ENCODE measurements at regions of chr19 and their contacts with region 1.

Region 1: DNA sequence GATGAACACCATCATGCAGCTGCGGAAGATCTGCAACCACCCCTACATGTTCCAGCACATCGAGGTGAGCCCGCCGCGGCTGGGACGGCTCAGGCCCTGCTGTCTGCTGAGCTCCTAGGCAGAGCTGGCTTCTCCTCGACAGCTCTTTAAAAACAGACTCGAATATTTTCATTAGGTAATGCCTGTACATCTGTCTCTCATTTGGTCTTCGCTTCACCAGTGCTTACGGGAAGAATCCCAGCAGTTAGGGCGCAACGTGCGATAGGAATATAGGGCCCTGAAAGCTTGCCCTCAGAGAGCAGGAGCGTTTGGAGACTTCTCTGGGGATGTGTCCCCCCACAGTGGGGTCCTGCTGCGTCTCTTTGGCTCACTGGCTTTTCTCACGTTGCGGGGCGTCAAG is 63.8 kb upstream of the LDLR start:
- DNase-seq: no peak
- H3K4me3 ChIP-seq: no peak overlapping the region
- H3K27ac ChIP-seq: no peak overlapping the region
- H3K4me1 ChIP-seq: peaks cover 4% of the 10 kb centered on the region
- H3K27me3 ChIP-seq: no peaks in the 10 kb centered on the region
- CTCF ChIP-seq: no peak

Region 2: DNA sequence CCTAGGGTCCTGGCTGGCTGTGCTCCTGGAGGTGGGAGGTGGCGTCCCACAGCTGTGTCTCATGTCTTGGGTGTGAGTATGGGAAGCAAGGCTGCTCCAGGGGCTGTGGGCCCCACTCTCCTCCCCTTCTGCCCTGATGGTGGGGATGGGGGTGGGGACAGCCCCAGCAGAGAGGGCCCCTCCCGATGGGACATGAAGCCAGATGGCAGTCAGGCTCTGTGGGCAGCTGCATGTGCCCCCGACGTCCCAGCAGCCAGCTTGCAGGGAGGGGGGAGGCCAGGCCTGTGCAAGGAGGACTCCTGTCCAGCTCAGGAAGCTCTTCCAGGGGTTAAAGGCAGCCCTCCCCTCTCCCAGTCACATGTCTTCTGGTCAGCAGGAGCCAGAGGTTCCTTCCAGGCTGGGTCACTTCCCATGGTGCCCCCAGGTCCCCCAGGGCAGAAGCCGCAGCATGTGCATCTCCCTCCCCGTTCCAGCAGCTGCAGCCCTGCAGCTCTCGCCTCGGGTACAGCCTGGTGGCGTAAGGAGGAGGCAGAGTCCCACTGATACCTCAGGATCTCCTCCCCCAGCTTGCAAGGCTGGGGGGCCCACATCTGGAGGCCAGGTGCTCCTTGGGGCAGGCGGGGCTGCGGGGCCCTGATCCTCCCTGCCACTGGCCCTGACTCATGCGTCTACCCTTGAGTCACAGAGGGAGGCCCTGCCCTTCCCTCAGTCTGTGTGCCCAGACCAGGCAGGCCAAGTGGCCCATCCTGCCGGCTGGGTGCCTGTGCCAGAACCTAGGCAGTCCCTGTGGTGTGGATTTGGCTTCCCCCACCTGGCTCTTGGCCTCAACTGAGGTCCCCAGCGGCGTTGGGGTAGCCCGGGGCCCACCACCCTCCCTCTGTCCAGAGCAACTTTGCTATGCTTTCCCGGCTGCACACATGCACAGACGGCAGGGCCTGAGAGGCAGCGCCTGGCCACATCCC is 110.0 kb before region 1 on chr19:
- CTCF ChIA-PET with region 1: no interaction called
- dilution Hi-C with region 1: loop called (anchors 5 kb)
- in situ Hi-C with region 1: no loop called
- intact Hi-C with region 1: no loop called
- DNase-seq: peak; percentile 75
- H3K4me3 ChIP-seq: no peak overlapping the region
- H3K27ac ChIP-seq: no peak overlapping the region
- H3K4me1 ChIP-seq: peaks cover 14% of the 10 kb centered on the region
- H3K27me3 ChIP-seq: no peaks in the 10 kb centered on the region
- CTCF ChIP-seq: no peak

Region 3: DNA sequence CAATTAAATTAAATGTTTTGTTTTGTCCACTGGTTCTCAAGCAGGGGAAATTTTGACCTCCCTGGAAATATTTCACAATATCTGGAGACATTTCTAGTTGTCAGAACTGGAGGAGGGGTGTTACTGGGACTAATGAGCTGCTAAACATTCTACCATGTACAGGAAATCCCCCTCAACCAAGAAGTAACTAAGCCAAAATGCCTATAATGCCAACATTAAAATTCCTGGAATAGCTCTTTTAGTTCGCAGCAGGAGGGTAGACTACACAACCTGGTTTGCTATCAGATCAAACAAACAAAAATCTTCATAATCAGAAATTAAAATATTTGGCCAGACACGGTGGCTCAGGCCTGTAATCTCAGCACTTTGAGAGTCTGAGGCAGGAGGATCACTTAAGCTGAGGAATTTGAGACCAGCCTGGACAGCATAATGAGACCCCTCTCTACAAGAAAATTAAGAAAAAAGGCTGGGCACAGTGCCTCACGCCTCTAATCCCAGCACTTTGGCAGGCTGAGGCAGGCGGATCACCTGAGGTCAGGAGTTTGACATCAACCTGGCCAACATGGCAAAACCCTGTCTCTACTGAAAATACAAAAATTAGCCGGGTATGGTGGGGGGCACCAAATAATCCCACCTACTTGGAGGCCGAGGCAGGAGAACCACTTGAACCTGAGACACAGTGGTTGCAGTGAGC is 78.3 kb before region 1 on chr19:
- CTCF ChIA-PET with region 1: no interaction called
- dilution Hi-C with region 1: no loop called
- in situ Hi-C with region 1: no loop called
- intact Hi-C with region 1: no loop called
- DNase-seq: no peak
- H3K4me3 ChIP-seq: no peak overlapping the region
- H3K27ac ChIP-seq: no peak overlapping the region
- H3K4me1 ChIP-seq: no peaks in the 10 kb centered on the region
- H3K27me3 ChIP-seq: no peaks in the 10 kb centered on the region
- CTCF ChIP-seq: no peak

Region 4: DNA sequence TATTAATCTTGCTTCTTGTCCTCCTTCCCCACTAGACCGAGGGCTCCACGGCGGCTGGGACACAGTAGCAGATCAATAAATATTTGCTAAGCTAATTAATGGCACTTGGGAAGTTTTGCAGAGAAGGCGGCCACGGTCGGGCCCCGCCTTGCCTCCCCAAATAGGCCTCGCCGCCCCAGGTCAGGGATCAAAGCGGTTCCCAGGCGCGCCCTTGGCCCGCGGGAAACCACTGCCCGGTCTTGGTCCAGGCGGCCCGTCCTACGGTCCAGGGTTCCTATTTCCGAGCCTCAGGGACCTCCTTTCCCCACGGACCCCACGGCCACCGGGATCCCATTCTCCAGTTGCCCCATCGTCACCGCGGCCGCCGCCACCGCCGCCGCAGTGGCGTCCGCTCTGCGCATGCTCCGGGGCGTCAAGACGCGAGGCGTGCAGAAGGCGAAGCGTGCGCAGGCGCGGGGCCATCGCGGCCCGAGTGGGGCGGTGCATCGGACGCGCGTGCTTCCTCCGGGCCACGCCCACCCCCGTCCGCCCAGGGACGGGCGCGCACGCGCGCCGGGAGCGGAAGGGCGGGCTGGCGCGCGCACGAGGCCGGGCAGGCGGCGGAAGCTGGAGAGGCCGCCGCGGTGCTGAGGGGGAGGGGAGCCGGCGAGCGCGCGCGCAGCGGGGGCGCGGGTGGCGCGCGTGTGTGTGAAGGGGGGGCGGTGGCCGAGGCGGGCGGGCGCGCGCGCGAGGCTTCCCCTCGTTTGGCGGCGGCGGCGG is 65.0 kb before region 1 on chr19 and contains the start of gene SMARCA4:
- CTCF ChIA-PET with region 1: no interaction called
- dilution Hi-C with region 1: loop called (anchors 5 kb)
- in situ Hi-C with region 1: no loop called
- intact Hi-C with region 1: no loop called
- DNase-seq: peak; percentile 95
- H3K4me3 ChIP-seq: peak within 1 kb of the TSS; percentile 80 to 92 (median 88)
- H3K27ac ChIP-seq: peak within 1 kb of the TSS; percentile 66
- H3K4me1 ChIP-seq: peaks cover 2% of the 10 kb centered on the region
- H3K27me3 ChIP-seq: no peaks in the 10 kb centered on the region
- CTCF ChIP-seq: no peak
- total RNA-seq, gene SMARCA4: 67.0 to 110 TPM

Region 5: GRCh38 chr19:10986261-10987127 is 39.0 kb before region 1 on chr19:
- CTCF ChIA-PET with region 1: no interaction called
- dilution Hi-C with region 1: loop called (anchors 5 kb)
- in situ Hi-C with region 1: no loop called
- intact Hi-C with region 1: no loop called
- DNase-seq: no peak
- H3K4me3 ChIP-seq: no peak overlapping the region
- H3K27ac ChIP-seq: no peak overlapping the region
- H3K4me1 ChIP-seq: no peaks in the 10 kb centered on the region
- H3K27me3 ChIP-seq: no peaks in the 10 kb centered on the region
- CTCF ChIP-seq: no peak

Region 6: DNA sequence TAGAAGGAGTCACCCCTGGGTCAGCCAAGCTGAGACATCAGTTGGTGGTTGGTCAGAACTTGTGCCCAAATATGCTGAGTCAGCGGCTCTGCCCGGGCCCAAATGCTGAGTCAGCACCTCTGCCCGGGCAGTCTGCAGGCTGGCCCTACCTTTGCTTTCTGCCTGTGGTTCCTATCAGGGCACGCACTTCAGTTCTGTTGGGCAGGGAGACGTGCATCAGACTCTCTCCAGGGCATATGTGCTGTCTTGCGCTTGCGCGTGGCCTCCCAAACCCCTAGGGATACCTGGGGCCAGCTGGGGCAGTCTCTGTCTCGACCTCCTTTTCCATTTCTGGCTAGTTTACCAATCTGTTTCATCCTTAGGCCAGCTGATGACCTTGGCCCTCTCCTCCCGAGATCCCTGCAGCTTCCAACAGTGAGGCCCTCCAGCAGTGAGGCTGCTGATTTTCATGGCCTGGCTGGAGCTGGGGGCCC is 39.4 kb after region 1 on chr19:
- CTCF ChIA-PET with region 1: no interaction called
- dilution Hi-C with region 1: loop called (anchors 5 kb)
- in situ Hi-C with region 1: no loop called
- intact Hi-C with region 1: no loop called
- DNase-seq: no peak
- H3K4me3 ChIP-seq: no peak overlapping the region
- H3K27ac ChIP-seq: no peak overlapping the region
- H3K4me1 ChIP-seq: no peaks in the 10 kb centered on the region
- H3K27me3 ChIP-seq: no peaks in the 10 kb centered on the region
- CTCF ChIP-seq: no peak

Region 7: DNA sequence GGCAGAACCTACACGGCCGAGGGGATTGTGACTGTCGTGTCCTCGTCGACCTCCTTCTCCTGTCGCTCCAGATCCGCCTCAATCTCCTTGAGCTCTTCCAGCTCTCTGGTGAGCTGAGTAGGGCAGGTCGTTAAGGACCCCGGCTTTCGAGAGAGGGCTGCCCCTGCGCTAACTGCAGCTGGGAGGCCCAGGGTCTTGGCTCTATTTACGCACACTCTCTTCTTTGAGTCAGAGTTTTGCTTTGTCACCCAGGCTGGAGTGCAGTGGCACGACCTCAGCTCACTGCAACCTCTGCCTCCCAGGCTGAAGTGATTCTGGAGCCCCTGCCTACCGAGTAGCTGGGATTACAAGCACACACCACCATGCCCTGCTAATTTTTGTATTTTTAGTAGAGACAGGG is 122.6 kb after region 1 on chr19:
- CTCF ChIA-PET with region 1: no interaction called
- dilution Hi-C with region 1: loop called (anchors 5 kb)
- in situ Hi-C with region 1: no loop called
- intact Hi-C with region 1: no loop called
- DNase-seq: no peak
- H3K4me3 ChIP-seq: no peak overlapping the region
- H3K27ac ChIP-seq: no peak overlapping the region
- H3K4me1 ChIP-seq: peaks cover 14% of the 10 kb centered on the region
- H3K27me3 ChIP-seq: no peaks in the 10 kb centered on the region
- CTCF ChIP-seq: no peak

Region 8: GRCh38 chr19:11179716-11180297 is 154.4 kb after region 1 on chr19:
- CTCF ChIA-PET with region 1: no interaction called
- dilution Hi-C with region 1: loop called (anchors 5 kb)
- in situ Hi-C with region 1: no loop called
- intact Hi-C with region 1: no loop called
- DNase-seq: no peak
- H3K4me3 ChIP-seq: no peak overlapping the region
- H3K27ac ChIP-seq: no peak overlapping the region
- H3K4me1 ChIP-seq: no peaks in the 10 kb centered on the region
- H3K27me3 ChIP-seq: no peaks in the 10 kb centered on the region
- CTCF ChIP-seq: no peak

Measured in mammary epithelial cell (primary cell).